ENCODE measurements at regions of chr9 and their contacts with region 1.

Region 1: DNA sequence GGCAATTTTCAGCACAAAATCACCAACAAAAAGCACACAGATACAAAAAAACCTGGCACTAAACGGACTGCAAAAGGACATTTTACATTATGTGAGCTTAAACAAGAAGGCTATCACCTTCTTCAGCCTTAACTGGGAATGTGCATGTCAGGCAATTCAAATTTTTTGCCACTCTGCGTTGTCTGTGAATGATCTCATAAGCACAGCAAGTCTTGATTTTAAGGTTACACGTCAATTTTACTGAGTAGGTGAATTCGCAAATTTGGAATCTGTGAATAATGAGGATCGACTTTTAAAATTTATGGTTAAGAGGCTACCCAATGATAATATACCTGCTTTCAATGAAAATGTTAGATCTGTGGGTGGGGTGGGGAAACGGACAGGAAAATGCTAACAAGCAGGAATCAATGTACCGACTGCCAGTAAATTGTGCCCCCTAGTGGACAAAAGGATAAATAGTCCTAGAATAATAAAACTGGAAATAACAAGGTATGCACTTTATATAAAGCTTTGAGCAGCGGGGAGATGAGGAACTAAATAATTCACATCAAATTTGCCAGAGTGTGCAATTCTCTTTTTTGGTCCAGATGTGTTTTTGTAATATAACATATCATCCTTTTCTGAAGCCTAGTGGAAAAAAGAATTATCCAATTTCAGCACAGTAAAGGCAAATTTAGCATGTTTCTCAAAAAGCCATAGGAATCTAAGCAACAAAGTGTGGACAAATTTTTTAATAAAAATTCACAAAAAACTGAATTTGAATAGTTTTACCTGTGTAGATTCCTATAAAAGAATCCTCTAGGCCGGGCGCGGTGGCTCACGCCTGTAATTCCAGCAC is 20.5 kb downstream of the EQTN start:
- DNase-seq: no peak
- H3K4me3 ChIP-seq: no peak overlapping the region
- H3K27ac ChIP-seq: no peak overlapping the region
- H3K4me1 ChIP-seq: no peaks in the 10 kb centered on the region; a peak in 1 of 7 replicates
- H3K27me3 ChIP-seq: no peaks in the 10 kb centered on the region
- CTCF ChIP-seq: peak in 2 of 3 experiments; percentile 62 to 63; a peak in 2 of 4 replicates
- EP300 ChIP-seq: no peak
- POLR2A ChIP-seq: no peak
- RAD21 ChIP-seq: peak; percentile 77 to 78

Region 2: GRCh38 chr9:27247756-27248155 is 28.7 kb before region 1 on chr9:
- CTCF ChIA-PET with region 1: interaction called, 22 read pairs
- POLR2A ChIA-PET with region 1: no interaction called
- DNase-seq: peak; percentile 25 to 56
- H3K4me3 ChIP-seq: no peak overlapping the region
- H3K27ac ChIP-seq: no peak overlapping the region
- H3K4me1 ChIP-seq: no peaks in the 10 kb centered on the region; a peak in 1 of 7 replicates
- H3K27me3 ChIP-seq: no peaks in the 10 kb centered on the region
- CTCF ChIP-seq: peak; percentile 54 to 88 (median 76)
- EP300 ChIP-seq: no peak
- POLR2A ChIP-seq: no peak
- RAD21 ChIP-seq: peak; percentile 73 to 81

Region 3: DNA sequence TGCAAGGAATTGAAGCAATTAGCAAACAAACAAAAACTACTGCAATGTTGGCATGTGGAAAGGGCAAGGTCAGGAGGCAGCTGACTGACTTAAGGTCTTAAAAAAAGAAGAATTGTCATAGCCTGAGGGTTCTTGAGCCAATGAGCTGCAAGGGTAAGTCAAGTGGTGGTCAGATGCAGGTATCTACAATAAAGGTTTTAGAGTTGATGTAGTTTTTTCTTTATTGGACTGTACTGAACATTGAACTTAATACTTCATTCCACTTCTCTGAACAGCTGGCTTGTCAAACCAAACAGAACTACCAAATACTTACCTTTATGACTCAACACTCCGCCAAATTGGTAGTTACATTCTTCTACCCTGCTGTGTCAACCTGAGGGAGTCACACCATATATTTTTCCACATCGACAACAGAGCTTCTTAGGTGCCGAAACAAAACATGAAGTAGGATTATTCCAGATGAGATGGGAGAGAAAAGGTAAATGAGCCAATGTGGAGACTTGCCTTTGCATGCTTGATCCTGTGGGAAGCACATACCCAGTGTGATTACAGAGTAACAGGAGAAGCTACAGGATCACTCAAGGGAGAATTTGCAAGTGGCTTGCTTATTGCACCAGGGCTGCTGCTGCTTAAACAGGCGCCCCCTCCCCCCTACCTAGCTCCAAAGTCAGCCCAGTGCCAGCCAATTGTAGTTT is 14.7 kb before region 1 on chr9:
- CTCF ChIA-PET with region 1: interaction called, 37 read pairs
- POLR2A ChIA-PET with region 1: no interaction called
- DNase-seq: no peak
- H3K4me3 ChIP-seq: no peak overlapping the region
- H3K27ac ChIP-seq: no peak overlapping the region
- H3K4me1 ChIP-seq: peaks cover 0 to 5% (median 0%) of the 10 kb centered on the region in 4 experiments; a peak in 2 of 7 replicates
- H3K27me3 ChIP-seq: no peaks in the 10 kb centered on the region
- CTCF ChIP-seq: no peak
- EP300 ChIP-seq: no peak
- POLR2A ChIP-seq: no peak
- RAD21 ChIP-seq: no peak

Measured in H1 (cell line).